Dorsolateral prefrontal cortex (tissue), 120 donors: ENCODE measurements at regions of chr19 and their contacts with region 1.

Region 1: DNA sequence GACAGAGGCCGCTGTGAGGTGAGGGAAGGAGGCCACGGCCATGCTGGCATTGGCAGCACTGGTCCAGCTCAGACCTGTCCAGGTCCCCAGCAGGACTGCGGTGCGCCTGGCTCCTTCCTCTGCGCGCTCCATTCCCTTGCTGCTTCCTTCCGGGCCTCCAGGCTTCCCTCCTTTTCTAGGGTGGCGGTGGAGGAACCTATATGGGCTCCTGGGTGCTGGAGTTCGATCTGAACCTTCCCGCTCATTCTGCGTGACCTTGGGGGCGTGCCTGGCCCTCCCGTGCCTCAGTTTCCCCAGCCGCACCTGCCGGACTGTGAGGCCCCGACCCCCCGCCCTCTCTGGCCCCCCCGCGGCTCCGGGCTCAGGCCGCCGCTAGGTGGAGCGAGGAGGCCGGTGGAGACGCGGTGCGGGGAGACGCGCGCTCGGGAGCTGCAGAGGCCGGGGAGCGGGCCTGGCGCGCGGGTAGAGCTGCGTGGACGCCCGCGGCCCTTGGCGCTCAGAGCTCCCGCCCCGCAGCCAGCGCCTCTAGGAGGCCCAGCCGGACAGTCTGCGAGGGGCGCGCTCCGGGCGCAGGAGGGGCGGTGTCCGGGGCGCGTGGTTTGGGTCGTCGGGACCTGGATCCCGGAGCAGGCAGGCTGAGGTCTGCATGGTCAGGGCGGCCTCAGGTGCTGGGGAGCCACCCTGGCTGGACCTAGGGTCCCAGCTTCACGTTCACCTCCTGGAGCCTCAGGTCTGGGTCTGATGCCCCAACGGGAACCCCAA is 30.0 kb downstream of the EFNA2 start:
- DNase-seq: peak; percentile 42 to 83 (median 68)
- H3K4me3 ChIP-seq: peak overlapping the region; percentile 8 to 62 (median 48)
- H3K27ac ChIP-seq: peak overlapping the region in 19 of 59 donors; percentile 2 to 78 (median 43)
- H3K27me3 ChIP-seq: no peaks in the 10 kb centered on the region
- CTCF ChIP-seq: peak; percentile 32 to 91 (median 77)

Region 2: DNA sequence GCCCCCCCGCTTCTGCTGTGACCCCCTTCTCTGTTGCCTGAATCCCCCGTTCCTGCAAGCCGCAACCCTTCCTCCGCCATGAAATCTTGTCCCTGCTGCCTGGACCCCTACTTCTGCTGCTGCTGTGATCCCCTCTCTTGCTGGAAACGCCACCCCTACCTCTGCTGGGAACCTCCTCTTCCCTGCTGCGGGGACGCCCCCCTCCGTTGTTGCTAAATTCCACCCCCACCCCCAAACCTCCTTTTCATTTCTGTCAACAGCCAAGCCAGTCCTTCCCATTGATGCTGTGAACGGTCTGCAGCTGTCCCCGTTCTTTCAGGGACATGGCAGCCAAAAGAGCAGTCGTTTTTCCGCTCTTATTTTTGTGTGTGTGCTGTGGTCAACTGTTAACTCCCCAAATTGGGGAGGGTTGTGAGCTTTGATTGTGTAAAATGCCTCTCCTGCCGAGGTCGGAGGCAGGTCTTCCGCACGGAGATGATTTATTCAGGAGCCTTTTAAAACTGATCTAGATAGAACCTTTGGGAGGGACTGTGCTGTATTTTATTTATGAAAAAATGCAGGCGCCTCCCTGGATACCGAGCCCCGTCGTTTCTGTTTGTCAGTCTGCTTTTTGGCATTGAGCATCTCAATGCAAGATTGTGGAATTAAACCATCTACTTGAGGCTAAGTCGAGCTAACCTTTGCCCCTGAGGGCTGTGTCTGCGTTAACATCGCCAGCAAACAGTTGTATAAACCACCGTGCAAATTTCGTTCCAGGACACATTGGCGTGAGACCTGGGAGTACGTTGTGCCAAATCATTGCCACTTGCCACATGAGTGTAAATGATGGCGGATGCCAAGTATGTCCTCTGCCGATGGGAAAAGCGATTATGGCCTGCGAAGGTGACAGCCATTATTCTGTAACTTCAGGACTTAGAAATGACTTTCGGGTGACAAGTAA is 40.2 kb after region 1 on chr19:
- intact Hi-C with region 1: loop called (anchors 5 kb)
- DNase-seq: peak in 6 of 10 donors; percentile 41 to 71 (median 60)
- H3K4me3 ChIP-seq: peak overlapping the region; percentile 48 to 93 (median 80)
- H3K27ac ChIP-seq: peak overlapping the region; percentile 12 to 100 (median 98)
- H3K27me3 ChIP-seq: no peaks in the 10 kb centered on the region
- CTCF ChIP-seq: no peak

Region 3: DNA sequence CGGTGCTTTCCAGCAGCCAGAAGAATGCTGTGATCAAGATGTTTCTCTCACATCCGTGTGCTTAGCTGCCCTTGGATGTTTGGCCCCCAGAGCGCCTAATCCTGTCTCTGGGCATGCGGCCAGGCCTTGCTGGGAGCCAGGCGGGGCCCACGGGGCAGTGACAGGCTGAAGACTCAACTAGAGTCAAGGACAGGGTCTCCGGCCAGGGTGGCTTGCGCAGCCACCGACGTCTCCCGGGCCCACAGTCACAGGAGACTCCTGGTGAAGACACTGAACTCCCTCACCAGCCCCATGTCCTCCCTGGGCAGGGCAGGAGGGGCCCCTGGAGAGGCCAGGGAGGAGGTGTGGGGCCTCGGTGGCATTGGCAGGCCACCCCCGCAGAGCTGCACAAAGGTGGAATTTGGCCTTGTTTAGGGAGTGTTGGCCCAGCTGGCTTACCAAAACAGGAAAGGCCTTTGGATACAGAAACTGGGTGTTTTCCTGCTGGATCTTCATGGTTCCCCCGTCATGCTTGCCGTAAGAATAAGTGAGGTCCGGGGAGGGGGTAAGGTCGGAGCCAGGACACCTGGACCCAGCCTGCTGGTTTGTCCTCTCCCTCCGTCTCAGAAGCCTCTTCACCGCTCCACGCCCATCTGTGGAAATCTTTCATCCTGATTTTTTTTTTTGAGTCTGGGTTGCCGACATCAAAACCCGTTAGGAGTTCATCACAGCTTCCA is 58.0 kb after region 1 on chr19:
- intact Hi-C with region 1: loop called in 1 of 2 experiments (anchors 10 kb)
- DNase-seq: peak in 4 of 10 donors; percentile 49 to 64 (median 58)
- H3K4me3 ChIP-seq: peak overlapping the region in 1 of 59 donors; percentile 1
- H3K27ac ChIP-seq: peak overlapping the region; percentile 25 to 90 (median 80)
- H3K27me3 ChIP-seq: no peaks in the 10 kb centered on the region
- CTCF ChIP-seq: no peak

Region 4: DNA sequence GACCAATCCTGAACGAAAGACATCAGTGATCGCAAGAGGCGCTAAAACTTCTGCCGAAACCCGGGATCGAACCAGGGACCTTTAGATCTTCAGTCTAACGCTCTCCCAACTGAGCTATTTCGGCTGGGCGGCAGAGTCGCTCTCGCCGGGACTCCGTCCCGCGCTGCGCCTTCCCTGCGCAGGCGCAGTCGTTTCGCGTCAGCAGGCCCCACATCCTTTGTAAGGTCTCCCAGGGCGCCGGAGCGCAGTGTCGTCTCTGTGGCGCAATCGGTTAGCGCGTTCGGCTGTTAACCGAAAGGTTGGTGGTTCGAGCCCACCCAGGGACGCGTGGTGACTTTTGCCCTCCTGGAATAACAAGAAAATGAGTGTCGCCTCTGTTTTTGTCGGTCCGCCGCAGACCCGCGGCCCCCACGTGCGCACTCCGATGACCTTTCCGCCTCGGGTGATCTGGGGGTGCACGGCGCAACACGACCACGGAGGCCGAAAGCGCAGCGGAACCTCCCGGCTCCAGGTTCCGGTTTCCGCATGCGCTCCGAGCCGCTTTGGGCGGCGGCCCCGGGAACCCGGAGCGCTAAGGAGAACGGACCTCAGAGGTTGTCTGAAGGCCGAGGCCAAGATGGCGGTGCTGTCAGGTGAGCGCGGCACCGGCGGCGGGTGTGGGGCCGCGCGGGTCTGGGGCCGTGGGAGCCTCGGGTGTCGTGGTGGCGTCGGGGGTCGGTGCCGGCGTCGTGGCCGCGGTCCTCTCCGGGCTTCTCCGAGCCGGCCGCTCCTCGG is 67.8 kb after region 1 on chr19 and contains the start of gene NDUFS7:
- intact Hi-C with region 1: loop called (anchors 2 to 10 kb)
- DNase-seq: peak; percentile 88 to 94 (median 92)
- H3K4me3 ChIP-seq: peak within 1 kb of the TSS; percentile 60 to 100 (median 95)
- H3K27ac ChIP-seq: peak within 1 kb of the TSS; percentile 88 to 100 (median 96)
- H3K27me3 ChIP-seq: no peaks in the 10 kb centered on the region
- CTCF ChIP-seq: peak in 28 of 56 donors; percentile 1 to 46 (median 22)
- total RNA-seq, gene NDUFS7: 105 to 222 (median 151) TPM